ENCODE measurements at regions of chr20 and their contacts with region 1.

Region 1: DNA sequence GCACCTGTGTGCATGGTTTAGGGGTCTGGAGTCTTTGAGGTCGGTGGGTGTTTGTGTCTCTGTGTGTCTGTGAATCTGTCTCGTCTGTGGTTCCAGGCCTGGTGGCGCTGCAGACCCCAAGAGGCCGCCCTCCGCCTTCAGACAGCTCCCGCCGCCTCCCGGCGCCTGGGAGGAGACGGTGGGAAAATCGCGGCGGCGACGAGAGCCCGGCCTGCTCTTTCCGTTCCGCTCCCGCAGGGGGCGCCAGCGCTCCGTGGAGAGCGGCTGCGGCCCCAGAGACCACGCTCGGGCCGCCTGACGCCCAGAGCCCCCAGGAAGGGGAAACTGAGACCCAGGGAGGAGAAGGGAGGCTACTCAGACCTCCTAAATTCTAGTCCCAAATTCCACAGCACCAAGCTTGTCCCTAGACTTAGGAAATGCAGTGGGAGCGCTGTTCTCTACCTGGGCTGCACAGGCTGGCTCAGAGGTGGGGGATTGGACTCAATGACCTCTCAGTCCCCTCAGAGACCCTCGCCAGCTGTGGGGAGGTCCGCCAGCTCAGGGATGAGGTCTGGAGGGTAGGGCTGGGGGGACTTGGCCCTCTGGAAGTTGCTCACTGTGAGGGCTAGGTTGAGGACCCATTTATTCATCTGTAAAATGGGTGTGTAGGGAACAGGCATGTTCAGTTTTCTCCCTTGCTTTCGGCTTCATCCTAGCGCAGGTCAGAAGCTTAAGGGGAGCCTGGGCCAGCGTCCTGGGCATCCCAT is 36.9 kb upstream of the BLCAP start:
- DNase-seq: peak in 1 of 2 donors; percentile 46
- H3K4me3 ChIP-seq: no peak overlapping the region
- H3K27ac ChIP-seq: no peak overlapping the region
- H3K4me1 ChIP-seq: peaks cover 0 to 7% (median 3%) of the 10 kb centered on the region in 4 donors
- H3K27me3 ChIP-seq: peaks cover 0 to 65% of the 10 kb centered on the region in 2 donors
- CTCF ChIP-seq: peak; percentile 74 to 89

Region 2: GRCh38 chr20:37627060-37627769 is 62.7 kb after region 1 on chr20:
- intact Hi-C with region 1: no loop called
- DNase-seq: no peak
- H3K4me3 ChIP-seq: no peak overlapping the region
- H3K27ac ChIP-seq: no peak overlapping the region
- H3K4me1 ChIP-seq: no peaks in the 10 kb centered on the region
- H3K27me3 ChIP-seq: peaks cover 0 to 49% of the 10 kb centered on the region in 2 donors
- CTCF ChIP-seq: no peak

Region 3: GRCh38 chr20:37990571-37991151 is 426.1 kb after region 1 on chr20:
- intact Hi-C with region 1: loop called (anchors 5 kb)
- DNase-seq: peak in 1 of 2 donors; percentile 23
- H3K4me3 ChIP-seq: no peak overlapping the region
- H3K27ac ChIP-seq: no peak overlapping the region
- H3K4me1 ChIP-seq: peaks cover 0 to 39% (median 32%) of the 10 kb centered on the region in 4 donors
- H3K27me3 ChIP-seq: no peaks in the 10 kb centered on the region
- CTCF ChIP-seq: no peak